ENCODE measurements at regions of chr1 and their contacts with region 1.

Region 1: DNA sequence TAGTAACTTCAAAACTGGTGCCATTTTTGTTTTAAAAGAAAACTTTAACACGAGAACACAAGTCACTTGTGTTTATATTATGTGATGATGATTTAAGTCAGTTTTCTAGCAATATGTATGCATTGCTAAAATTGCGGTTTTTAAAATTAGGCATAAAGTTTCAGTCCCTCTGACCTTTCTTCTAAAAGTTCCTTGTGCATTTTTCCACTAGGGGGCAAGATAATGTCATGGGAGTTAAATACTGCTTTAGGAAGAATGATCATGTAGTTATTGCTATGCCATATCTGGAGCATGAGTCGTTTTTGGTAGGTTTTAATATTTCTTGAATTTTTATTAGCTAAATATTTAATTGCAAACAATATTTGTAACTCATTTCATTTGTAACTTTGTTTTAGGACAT is 10.7 kb downstream of the CDC7 start:
- DNase-seq: peak in 2 of 9 experiments; percentile 61 to 71
- ATAC-seq: no peak
- H3K4me3 ChIP-seq: no peak overlapping the region
- H3K4me3 Mint-ChIP-seq: no peak overlapping the region
- H3K27ac ChIP-seq: no peak overlapping the region
- H3K27ac Mint-ChIP-seq: no peak overlapping the region
- H3K4me1 ChIP-seq: no peaks in the 10 kb centered on the region
- H3K4me1 Mint-ChIP-seq: no peaks in the 10 kb centered on the region
- H3K27me3 ChIP-seq: no peaks in the 10 kb centered on the region
- H3K27me3 Mint-ChIP-seq: no peaks in the 10 kb centered on the region
- CTCF ChIP-seq: peak; percentile 69

Region 2: DNA sequence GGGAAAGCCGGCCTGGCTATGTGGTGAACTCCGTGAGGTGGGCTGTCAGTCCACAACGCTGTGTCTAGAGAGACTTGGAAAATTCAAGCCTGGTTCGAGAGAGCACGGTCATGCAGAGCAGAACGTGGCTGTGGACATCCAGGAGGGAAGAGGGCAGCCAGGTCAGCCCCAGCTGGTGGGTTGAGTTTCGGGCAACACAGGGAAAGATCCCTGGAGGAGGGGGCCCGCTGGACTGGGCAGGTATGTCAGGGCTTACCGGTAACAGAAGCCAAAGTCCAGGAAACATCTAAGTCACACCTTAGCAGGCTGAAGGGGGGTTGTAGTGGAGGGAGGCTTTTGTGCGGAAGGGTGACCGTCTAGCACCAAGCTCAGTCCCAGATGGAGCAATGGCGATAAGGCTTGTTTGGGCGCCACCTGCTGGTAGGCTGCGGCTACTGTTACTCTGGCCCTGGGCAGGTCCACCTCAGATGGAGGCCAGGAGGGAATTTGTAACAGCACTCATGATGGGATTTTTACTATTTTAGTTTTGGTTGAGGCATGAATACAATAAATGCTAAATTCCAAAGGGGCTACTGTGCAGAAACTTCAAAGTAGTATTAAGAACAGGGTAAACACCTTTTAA is 346.2 kb before region 1 on chr1:
- CTCF ChIA-PET with region 1: interaction called, 6 read pairs
- POLR2A ChIA-PET with region 1: no interaction called
- intact Hi-C with region 1: loop called (anchors 2 to 5 kb)
- DNase-seq: peak; percentile 39 to 79 (median 69)
- ATAC-seq: peak; percentile 76
- H3K4me3 ChIP-seq: no peak overlapping the region
- H3K4me3 Mint-ChIP-seq: no peak overlapping the region
- H3K27ac ChIP-seq: no peak overlapping the region
- H3K27ac Mint-ChIP-seq: no peak overlapping the region
- H3K4me1 ChIP-seq: no peaks in the 10 kb centered on the region
- H3K4me1 Mint-ChIP-seq: no peaks in the 10 kb centered on the region
- H3K27me3 ChIP-seq: no peaks in the 10 kb centered on the region
- H3K27me3 Mint-ChIP-seq: no peaks in the 10 kb centered on the region
- CTCF ChIP-seq: peak; percentile 82

Region 3: GRCh38 chr1:91450260-91450659 is 61.1 kb before region 1 on chr1:
- CTCF ChIA-PET with region 1: no interaction called
- POLR2A ChIA-PET with region 1: no interaction called
- intact Hi-C with region 1: no loop called
- DNase-seq: no peak
- ATAC-seq: no peak
- H3K4me3 ChIP-seq: no peak overlapping the region
- H3K4me3 Mint-ChIP-seq: no peak overlapping the region
- H3K27ac ChIP-seq: no peak overlapping the region
- H3K27ac Mint-ChIP-seq: no peak overlapping the region
- H3K4me1 ChIP-seq: no peaks in the 10 kb centered on the region
- H3K4me1 Mint-ChIP-seq: no peaks in the 10 kb centered on the region
- H3K27me3 ChIP-seq: no peaks in the 10 kb centered on the region
- H3K27me3 Mint-ChIP-seq: peaks cover 3% of the 10 kb centered on the region
- CTCF ChIP-seq: no peak

Region 4: GRCh38 chr1:91500756-91501522 is 10.4 kb before region 1 on chr1 and contains the start of gene CDC7:
- CTCF ChIA-PET with region 1: interaction called, 20 read pairs
- POLR2A ChIA-PET with region 1: interaction called, 3 read pairs
- intact Hi-C with region 1: no loop called
- DNase-seq: peak; percentile 56 to 92 (median 85)
- ATAC-seq: peak; percentile 83
- H3K4me3 ChIP-seq: peak within 1 kb of the TSS; percentile 88 to 98
- H3K4me3 Mint-ChIP-seq: no peak within 1 kb of the TSS
- H3K27ac ChIP-seq: peak within 1 kb of the TSS; percentile 58 to 86
- H3K27ac Mint-ChIP-seq: no peak within 1 kb of the TSS
- H3K4me1 ChIP-seq: peaks cover 10% of the 10 kb centered on the region
- H3K4me1 Mint-ChIP-seq: peaks cover 21% of the 10 kb centered on the region
- H3K27me3 ChIP-seq: no peaks in the 10 kb centered on the region
- H3K27me3 Mint-ChIP-seq: no peaks in the 10 kb centered on the region
- CTCF ChIP-seq: no peak
- total RNA-seq, gene CDC7: 2.2 to 2.7 TPM

Region 5: DNA sequence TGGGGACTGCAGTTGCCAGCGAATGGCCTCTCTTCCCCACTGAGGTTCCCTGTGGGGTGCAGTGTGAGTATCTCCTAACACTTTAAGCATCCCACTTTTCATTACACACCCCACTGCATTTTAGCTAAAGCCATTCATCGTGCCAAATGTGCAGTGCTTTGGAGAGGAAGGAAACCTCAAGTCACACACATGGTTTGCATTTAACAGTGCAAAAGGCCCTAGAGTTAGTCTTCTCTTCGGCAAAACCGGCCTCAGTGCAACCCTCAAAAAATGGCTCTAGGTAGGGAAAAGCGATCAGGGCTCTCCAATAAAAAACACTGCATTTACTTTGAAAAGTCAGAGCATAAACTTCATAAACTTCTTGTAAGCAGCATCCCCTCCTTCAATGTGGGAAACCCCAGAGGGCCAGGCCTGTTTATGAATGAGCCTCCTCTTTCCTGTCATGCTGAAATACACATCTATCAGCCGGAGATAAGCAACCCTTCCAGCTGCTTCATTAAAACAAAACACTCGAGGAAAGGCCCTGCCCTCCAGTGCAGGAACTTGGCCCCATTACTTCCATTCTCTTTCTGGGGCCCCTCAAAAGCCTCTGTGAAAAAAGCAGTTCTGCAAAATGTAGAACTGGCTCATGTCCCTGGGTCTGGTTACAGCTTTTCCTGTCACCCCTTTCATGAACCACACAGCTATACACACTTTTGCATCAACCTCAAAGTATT is 173.3 kb after region 1 on chr1:
- CTCF ChIA-PET with region 1: interaction called, 11 read pairs
- POLR2A ChIA-PET with region 1: no interaction called
- intact Hi-C with region 1: no loop called
- DNase-seq: peak in 6 of 9 experiments; percentile 1 to 65 (median 22)
- ATAC-seq: peak; percentile 52
- H3K4me3 ChIP-seq: no peak overlapping the region
- H3K4me3 Mint-ChIP-seq: peak overlapping the region; percentile 15
- H3K27ac ChIP-seq: peak overlapping the region in 1 of 2 experiments; percentile 59
- H3K27ac Mint-ChIP-seq: peak overlapping the region; percentile 79
- H3K4me1 ChIP-seq: peaks cover 22% of the 10 kb centered on the region
- H3K4me1 Mint-ChIP-seq: peaks cover 21% of the 10 kb centered on the region
- H3K27me3 ChIP-seq: no peaks in the 10 kb centered on the region
- H3K27me3 Mint-ChIP-seq: no peaks in the 10 kb centered on the region
- CTCF ChIP-seq: no peak

Region 6: GRCh38 chr1:91712981-91713841 is 201.8 kb after region 1 on chr1:
- CTCF ChIA-PET with region 1: interaction called, 4 read pairs
- POLR2A ChIA-PET with region 1: no interaction called
- intact Hi-C with region 1: loop called in 1 of 2 experiments (anchors 10 kb)
- DNase-seq: peak in 7 of 9 experiments; percentile 15 to 81 (median 32)
- ATAC-seq: peak; percentile 78
- H3K4me3 ChIP-seq: no peak overlapping the region
- H3K4me3 Mint-ChIP-seq: peak overlapping the region; percentile 2
- H3K27ac ChIP-seq: peak overlapping the region; percentile 5 to 65
- H3K27ac Mint-ChIP-seq: peak overlapping the region; percentile 38
- H3K4me1 ChIP-seq: peaks cover 6% of the 10 kb centered on the region
- H3K4me1 Mint-ChIP-seq: peaks cover 10% of the 10 kb centered on the region
- H3K27me3 ChIP-seq: no peaks in the 10 kb centered on the region
- H3K27me3 Mint-ChIP-seq: no peaks in the 10 kb centered on the region
- CTCF ChIP-seq: no peak

Region 7: DNA sequence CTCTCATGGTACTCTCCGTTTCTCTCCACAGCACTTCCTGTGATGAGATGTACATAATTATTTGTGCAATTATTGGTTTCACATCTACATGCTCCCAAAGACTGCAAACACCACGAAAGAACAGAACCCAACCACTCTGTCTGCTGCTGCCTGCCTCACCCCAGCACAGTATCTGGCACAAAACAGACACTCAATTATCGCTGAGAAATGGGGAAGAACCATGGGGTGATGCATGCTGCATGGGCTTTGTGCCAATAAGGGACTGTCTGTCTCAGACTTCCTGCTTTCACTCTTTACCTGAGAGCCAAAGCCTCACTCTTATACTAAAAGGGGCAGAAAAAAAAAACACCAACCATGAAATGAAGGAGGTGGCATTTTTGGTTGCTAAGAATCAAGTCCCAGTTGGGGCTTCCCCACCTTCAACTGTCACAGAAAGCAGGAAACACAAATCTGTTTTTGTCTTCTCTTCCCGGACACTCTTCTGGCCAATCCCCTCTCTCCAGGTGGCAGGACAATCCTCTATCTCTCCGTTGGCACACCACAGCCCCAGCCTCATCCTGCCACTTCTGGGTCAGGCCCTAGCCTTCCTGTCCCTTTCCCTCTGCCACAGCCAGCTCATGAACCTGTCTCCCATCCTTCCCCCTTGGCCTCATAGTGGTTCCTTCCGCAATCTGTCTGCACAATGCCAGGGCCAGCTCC is 292.6 kb after region 1 on chr1:
- CTCF ChIA-PET with region 1: interaction called, 5 read pairs
- POLR2A ChIA-PET with region 1: no interaction called
- intact Hi-C with region 1: loop called in 1 of 2 experiments (anchors 5 kb)
- DNase-seq: peak; percentile 45 to 96 (median 77)
- ATAC-seq: peak; percentile 55
- H3K4me3 ChIP-seq: peak overlapping the region; percentile 37 to 51
- H3K4me3 Mint-ChIP-seq: peak overlapping the region; percentile 70
- H3K27ac ChIP-seq: peak overlapping the region; percentile 98 to 99
- H3K27ac Mint-ChIP-seq: peak overlapping the region; percentile 97
- H3K4me1 ChIP-seq: peaks cover 34% of the 10 kb centered on the region
- H3K4me1 Mint-ChIP-seq: peaks cover 52% of the 10 kb centered on the region
- H3K27me3 ChIP-seq: no peaks in the 10 kb centered on the region
- H3K27me3 Mint-ChIP-seq: no peaks in the 10 kb centered on the region
- CTCF ChIP-seq: no peak

Region 8: DNA sequence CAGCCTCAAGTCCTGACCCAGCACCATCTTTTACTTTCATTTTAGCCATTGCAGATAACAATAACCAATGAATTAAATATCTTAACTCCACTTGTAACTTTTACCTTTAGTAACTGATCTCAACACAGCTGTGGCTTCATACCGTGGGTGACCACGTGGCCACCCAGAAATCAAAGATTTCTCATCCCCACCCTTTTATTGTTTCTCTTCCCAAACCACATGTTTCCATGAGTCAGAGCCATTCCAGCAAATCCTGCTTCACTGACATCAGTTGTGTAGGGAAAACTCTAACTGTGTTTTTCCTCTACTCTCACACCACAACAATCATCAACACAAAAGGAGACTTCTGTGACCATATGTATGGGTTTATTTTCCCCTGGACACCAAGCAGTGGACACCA is 412.8 kb after region 1 on chr1:
- CTCF ChIA-PET with region 1: interaction called, 233 read pairs
- POLR2A ChIA-PET with region 1: interaction called, 4 read pairs
- intact Hi-C with region 1: loop called (anchors 1 kb)
- DNase-seq: no peak
- ATAC-seq: no peak
- H3K4me3 ChIP-seq: no peak overlapping the region
- H3K4me3 Mint-ChIP-seq: no peak overlapping the region
- H3K27ac ChIP-seq: no peak overlapping the region
- H3K27ac Mint-ChIP-seq: no peak overlapping the region
- H3K4me1 ChIP-seq: no peaks in the 10 kb centered on the region
- H3K4me1 Mint-ChIP-seq: no peaks in the 10 kb centered on the region
- H3K27me3 ChIP-seq: no peaks in the 10 kb centered on the region
- H3K27me3 Mint-ChIP-seq: no peaks in the 10 kb centered on the region
- CTCF ChIP-seq: no peak

Measured in CD8-positive, alpha-beta T cell (primary cell).